Ascending aorta (tissue), 2 donors: ENCODE measurements at regions of chr2 and their contacts with region 1.

Region 1: GRCh38 chr2:209423562-209424198 is at the start of gene MAP2:
- DNase-seq: peak; percentile 32 to 92
- H3K4me3 ChIP-seq: peak within 1 kb of the TSS; percentile 61 to 74
- H3K27ac ChIP-seq: peak within 1 kb of the TSS; percentile 61 to 70
- H3K4me1 ChIP-seq: peaks cover 0 to 8% of the 10 kb centered on the region in 2 donors
- H3K27me3 ChIP-seq: no peaks in the 10 kb centered on the region
- CTCF ChIP-seq: peak; percentile 76 to 99 (median 78)
- total RNA-seq, gene MAP2: 57.6 TPM

Region 2: DNA sequence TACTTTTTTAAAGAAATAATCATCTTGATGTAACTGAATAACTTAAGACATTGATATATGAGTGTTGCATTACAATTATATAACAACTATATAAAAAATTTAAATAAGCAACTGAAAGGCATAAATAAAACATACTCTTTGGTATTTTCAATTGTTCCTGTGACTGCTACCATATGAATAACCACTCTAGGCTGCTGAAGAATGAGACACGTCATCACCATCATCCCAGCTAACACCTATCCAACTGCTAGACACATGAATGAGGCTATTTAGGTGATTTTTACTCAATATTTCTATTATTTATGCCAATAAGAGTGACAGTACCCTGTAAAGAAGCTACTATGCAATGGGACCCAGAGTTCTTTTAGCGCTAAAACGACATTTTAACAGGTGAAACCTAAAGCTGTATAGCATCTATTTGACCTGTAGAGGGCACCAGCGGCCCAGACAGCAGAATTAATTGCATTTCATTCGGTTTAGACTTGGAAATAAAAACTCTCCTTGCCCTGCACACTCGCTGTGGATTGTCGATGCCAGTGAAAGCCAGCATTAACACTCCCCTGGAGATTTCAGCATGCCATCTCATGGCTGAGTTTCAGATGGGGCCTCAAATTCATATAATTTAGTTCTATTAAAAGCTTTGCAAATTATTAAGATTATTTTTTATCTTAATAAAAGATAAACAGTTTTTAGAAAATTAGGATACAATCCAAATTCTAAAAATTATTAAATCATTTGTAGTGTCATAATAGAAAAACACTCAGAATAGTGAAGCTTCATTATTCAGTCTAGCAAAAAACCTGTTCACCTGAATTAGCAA is 89.3 kb before region 1 on chr2:
- intact Hi-C with region 1: loop called (anchors 2 kb)
- DNase-seq: peak in 1 of 2 donors; percentile 70
- H3K4me3 ChIP-seq: no peak overlapping the region
- H3K27ac ChIP-seq: no peak overlapping the region
- H3K4me1 ChIP-seq: no peaks in the 10 kb centered on the region
- H3K27me3 ChIP-seq: no peaks in the 10 kb centered on the region
- CTCF ChIP-seq: peak; percentile 63 to 92 (median 90)

Region 3: GRCh38 chr2:209463226-209463625 is 39.5 kb after region 1 on chr2:
- intact Hi-C with region 1: loop called (anchors 5 kb)
- DNase-seq: no peak
- H3K4me3 ChIP-seq: no peak overlapping the region
- H3K27ac ChIP-seq: peak overlapping the region; percentile 8 to 46
- H3K4me1 ChIP-seq: peaks cover 0 to 7% of the 10 kb centered on the region in 2 donors
- H3K27me3 ChIP-seq: no peaks in the 10 kb centered on the region
- CTCF ChIP-seq: peak; percentile 6 to 51 (median 26)

Region 4: DNA sequence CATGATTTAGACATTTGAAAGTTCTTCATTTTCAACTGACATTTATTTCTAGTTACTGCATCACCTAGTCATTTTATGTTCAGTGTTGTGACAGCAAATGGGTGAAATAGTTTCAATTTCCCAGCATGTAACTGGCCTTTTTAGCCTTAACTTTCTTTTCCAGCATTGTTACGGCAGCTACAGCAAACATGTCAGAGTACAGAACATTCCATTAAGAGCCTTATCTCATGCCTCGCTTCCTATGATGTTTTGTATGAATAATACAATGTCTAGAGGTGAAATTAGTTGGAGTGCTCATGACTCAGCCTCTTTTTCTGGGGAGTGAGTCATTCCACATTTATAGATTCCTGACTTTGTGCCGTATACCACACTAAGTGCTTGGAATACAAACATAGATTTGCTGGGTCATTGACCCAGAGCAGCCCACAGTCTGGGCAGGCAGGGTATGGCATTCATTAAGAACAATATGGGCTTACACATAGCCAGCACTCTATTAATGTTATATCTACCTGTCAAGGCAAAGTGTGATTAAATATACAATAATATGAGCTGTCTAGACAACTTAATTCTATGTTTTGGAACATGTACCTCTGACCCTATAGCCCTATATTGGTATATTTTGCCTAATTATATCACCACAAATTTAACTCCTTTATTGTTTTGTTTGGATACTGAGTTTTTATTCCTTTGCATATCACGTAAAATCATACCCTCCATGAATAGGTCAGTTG is 72.3 kb after region 1 on chr2:
- intact Hi-C with region 1: loop called (anchors 2 kb)
- DNase-seq: peak; percentile 17 to 80
- H3K4me3 ChIP-seq: peak overlapping the region; percentile 6 to 33
- H3K27ac ChIP-seq: peak overlapping the region; percentile 85 to 89
- H3K4me1 ChIP-seq: peaks cover 0 to 6% of the 10 kb centered on the region in 2 donors
- H3K27me3 ChIP-seq: no peaks in the 10 kb centered on the region
- CTCF ChIP-seq: no peak

Region 5: GRCh38 chr2:209556354-209556961 is 132.8 kb after region 1 on chr2:
- intact Hi-C with region 1: loop called (anchors 1 kb)
- DNase-seq: no peak
- H3K4me3 ChIP-seq: no peak overlapping the region
- H3K27ac ChIP-seq: no peak overlapping the region
- H3K4me1 ChIP-seq: no peaks in the 10 kb centered on the region
- H3K27me3 ChIP-seq: no peaks in the 10 kb centered on the region
- CTCF ChIP-seq: peak; percentile 19 to 61 (median 53)

Region 6: GRCh38 chr2:209593930-209594329 is 170.2 kb after region 1 on chr2:
- intact Hi-C with region 1: no loop called
- DNase-seq: no peak
- H3K4me3 ChIP-seq: no peak overlapping the region
- H3K27ac ChIP-seq: no peak overlapping the region
- H3K4me1 ChIP-seq: no peaks in the 10 kb centered on the region
- H3K27me3 ChIP-seq: no peaks in the 10 kb centered on the region
- CTCF ChIP-seq: no peak

Region 7: GRCh38 chr2:210171309-210172203 is 747.9 kb after region 1 on chr2 and contains the start of gene KANSL1L:
- intact Hi-C with region 1: loop called (anchors 5 kb)
- DNase-seq: peak; percentile 94 to 99
- H3K4me3 ChIP-seq: peak within 1 kb of the TSS; percentile 79 to 99
- H3K27ac ChIP-seq: peak within 1 kb of the TSS; percentile 98 to 100
- H3K4me1 ChIP-seq: peaks cover 6 to 19% of the 10 kb centered on the region in 2 donors
- H3K27me3 ChIP-seq: no peaks in the 10 kb centered on the region
- CTCF ChIP-seq: no peak
- total RNA-seq, gene KANSL1L: 39.6 TPM